Activated T-helper 2 cell treated with anti-CD3 and anti-CD28 coated beads, Interferon-gamma antibody, Interleukin-2, Interleukin-4, amounts not matched to agents 10 μg/mL and 5 μg/mL and 100 μg/mL, durations not matched to agents 14 hours and 24 hours and 36 hours (primary cell): ENCODE measurements at regions of chr21 and their contacts with region 1.

Region 1: GRCh38 chr21:26834181-26834945 is 10.8 kb downstream of the ADAMTS1 start:
- DNase-seq: no peak
- H3K4me3 Mint-ChIP-seq: no peak overlapping the region
- H3K27ac Mint-ChIP-seq: no peak overlapping the region
- H3K4me1 Mint-ChIP-seq: peaks cover 45% of the 10 kb centered on the region
- H3K27me3 Mint-ChIP-seq: peaks cover 3% of the 10 kb centered on the region

Region 2: DNA sequence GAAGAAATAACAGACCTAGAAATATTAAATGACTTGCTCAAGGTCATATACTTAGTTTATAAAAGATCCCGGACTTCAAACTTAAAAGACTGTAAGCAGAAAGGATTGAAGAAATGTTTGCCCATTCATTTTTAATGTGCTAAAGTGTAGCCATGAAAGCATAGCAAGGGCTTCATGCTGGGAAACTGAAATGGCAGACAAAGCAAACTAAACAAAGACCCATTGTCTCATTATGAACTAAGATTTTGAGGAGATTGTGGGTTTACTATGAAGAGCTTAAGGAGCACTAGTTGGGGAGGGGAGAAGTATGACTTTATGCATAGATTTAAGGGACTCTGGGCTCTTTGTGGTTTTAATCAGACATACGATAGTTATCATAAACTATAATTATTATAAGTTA is 15.5 kb before region 1 on chr21:
- intact Hi-C with region 1: loop called (anchors 2 kb)
- DNase-seq: no peak
- H3K4me3 Mint-ChIP-seq: no peak overlapping the region
- H3K27ac Mint-ChIP-seq: no peak overlapping the region
- H3K4me1 Mint-ChIP-seq: no peaks in the 10 kb centered on the region
- H3K27me3 Mint-ChIP-seq: peaks cover 11% of the 10 kb centered on the region